Prostate gland (tissue), 2 donors: ENCODE measurements at regions of chr20 and their contacts with region 1.

Region 1: GRCh38 chr20:59232618-59233017 is 67.8 kb upstream of the EDN3 start:
- DNase-seq: no peak
- H3K4me3 ChIP-seq: no peak overlapping the region
- H3K27ac ChIP-seq: no peak overlapping the region
- H3K4me1 ChIP-seq: no peaks in the 10 kb centered on the region
- H3K27me3 ChIP-seq: no peaks in the 10 kb centered on the region
- CTCF ChIP-seq: no peak
- POLR2A ChIP-seq: no peak

Region 2: DNA sequence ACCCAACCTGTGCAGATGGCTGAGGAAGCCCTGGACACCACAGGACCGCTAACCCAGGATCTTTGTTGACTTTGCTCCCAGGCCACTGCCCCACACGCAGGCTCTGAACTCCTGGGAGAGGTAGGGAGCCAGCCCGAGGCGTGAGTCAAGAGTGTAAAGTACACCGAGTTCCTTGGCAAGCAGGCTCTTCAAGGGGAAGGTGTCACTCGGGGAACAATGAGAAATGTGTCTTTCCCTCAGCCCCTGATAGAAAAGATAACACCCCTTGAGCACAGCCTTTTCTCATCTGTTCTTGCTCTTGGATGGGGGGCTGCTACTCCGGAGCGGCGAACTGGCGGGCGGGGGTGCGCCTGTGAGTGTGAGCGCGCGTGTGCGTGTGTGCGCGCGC is 67.3 kb after region 1 on chr20:
- intact Hi-C with region 1: loop called (anchors 10 kb)
- DNase-seq: peak; percentile 29
- H3K4me3 ChIP-seq: peak overlapping the region; percentile 26 to 27
- H3K27ac ChIP-seq: no peak overlapping the region
- H3K4me1 ChIP-seq: no peaks in the 10 kb centered on the region
- H3K27me3 ChIP-seq: no peaks in the 10 kb centered on the region
- CTCF ChIP-seq: no peak
- POLR2A ChIP-seq: no peak

Region 3: DNA sequence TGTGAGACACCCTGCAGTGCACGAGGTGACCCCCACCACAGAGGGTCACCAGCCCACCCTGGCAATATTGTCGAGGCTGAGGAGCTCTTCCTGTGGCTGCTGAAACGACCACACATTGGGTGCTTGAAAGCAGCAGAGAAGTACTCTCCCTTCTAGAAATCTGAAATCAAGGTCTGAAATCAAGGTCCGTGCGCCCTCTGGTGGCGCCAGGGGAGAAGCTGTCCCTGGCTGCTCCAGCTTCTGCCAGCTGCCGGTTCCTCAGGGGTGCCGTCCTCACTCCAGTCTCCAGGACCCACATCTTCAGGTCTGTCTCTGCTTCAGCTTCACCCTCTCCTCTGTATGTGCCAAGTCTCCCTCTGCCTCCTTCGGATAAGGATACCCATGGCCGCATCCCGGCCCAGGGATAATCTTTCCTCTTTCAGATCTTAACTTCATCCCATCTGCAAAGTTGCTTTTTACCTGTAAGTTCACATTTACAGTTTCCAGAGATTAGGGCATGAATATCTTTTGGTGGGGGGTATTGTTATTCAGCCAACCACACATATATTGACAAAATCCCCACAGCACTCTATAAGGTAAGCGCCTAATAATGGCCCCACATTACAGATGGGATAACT is 263.4 kb after region 1 on chr20:
- intact Hi-C with region 1: no loop called
- DNase-seq: peak; percentile 42
- H3K4me3 ChIP-seq: no peak overlapping the region
- H3K27ac ChIP-seq: no peak overlapping the region
- H3K4me1 ChIP-seq: no peaks in the 10 kb centered on the region
- H3K27me3 ChIP-seq: no peaks in the 10 kb centered on the region
- CTCF ChIP-seq: peak; percentile 35 to 69 (median 62)
- POLR2A ChIP-seq: no peak